ENCODE measurements at regions of chr12 and their contacts with region 1.

Region 1: DNA sequence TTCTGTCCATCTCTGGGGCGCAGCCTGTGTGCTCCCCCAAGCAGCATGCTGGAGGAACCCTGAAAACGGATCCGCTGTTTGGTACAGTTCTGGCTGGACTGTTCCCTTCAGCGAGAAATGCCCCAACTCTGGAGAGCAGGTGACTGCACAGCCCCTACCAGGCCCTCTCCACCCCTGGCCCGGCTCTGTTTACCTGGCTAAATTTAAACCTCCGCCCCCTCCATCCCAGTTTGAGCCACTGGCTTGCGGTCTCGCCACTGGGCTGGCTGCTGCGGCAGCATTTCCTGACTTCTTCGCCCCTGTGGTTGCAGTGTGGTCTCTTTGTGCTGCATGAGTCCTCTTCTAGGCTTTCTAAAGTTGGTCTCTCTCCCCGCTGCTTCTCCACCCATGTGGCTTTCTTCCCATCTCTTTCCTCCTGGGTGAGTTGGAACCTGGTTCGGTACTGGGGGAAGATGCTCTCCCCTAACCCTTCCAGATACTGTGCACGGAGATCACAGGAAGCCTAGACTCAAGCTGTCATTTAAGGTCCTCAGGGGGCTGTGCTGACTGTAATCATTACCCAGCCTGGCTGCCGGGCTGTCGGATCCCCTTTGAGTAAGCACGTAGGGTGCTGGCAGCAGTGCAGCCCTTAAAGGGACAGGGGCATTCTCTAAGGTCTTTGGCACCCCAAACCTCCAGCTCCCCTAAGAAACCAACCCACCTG is 60.6 kb downstream of the FBXL14 start:
- DNase-seq: no peak
- H3K4me3 ChIP-seq: peak overlapping the region; percentile 28
- CTCF ChIP-seq: no peak

Region 2: DNA sequence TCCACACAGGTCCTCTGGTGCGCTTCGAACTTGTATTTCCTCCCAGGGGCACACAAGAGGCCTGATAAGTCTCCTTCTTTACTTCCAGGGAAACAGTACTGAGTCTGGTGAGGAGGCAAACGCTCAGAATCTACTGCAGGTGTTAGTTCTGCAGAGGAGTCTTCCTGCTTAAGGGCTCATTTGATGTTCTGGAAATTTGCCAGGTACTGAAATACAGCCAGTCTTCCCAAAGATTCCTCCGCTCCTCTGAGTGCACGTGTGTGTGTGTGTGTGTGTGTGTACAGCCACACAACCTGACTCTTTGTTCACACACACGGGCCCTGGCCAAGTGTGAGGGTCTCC is 31.4 kb before region 1 on chr12:
- CTCF ChIA-PET with region 1: no interaction called
- POLR2A ChIA-PET with region 1: no interaction called
- DNase-seq: no peak
- H3K4me3 ChIP-seq: no peak overlapping the region
- CTCF ChIP-seq: no peak

Region 3: DNA sequence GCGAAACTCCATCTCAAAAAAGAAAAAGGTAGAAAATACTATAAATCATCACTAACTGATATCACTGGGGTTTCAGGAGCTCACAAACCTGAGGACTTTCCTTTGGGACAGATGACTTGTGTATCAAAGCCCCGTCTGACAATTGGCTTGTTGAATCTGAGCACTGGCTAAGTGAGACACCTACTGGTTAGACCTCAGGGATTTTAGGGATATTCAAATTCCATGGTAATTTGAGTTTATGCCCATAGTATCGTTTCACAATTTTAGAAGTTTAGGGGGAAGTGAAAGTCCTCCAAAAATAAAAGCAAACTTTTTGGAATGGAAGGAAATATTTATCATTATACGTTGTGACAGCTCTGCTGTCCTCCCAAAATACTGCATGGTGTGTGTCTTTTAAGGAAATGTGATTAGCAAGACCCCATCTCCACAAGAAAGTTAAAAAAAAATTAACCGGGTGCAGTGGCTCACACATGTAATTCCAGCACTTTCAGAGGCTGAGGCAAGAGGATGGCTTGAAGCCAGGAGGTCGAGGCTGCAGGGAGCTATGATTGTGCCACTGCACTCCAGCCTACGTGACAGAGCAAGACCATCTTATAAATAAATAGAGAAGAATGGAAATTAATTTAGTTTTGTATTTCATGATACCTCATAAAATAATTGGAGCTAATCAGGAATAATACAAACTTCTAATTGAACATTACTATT is 11.4 kb after region 1 on chr12:
- CTCF ChIA-PET with region 1: interaction called, 12 read pairs
- POLR2A ChIA-PET with region 1: no interaction called
- DNase-seq: no peak
- H3K4me3 ChIP-seq: no peak overlapping the region
- CTCF ChIP-seq: peak; percentile 8

Measured in AG04449 (cell line).